Sigmoid colon (tissue), 7 donors: ENCODE measurements at regions of chr6 and their contacts with region 1.

Region 1: GRCh38 chr6:105077596-105078385 is 102.0 kb downstream of the POPDC3 start:
- DNase-seq: no peak
- H3K4me3 ChIP-seq: no peak overlapping the region
- H3K27ac ChIP-seq: no peak overlapping the region
- H3K4me1 ChIP-seq: peaks cover 0 to 28% (median 17%) of the 10 kb centered on the region in 4 donors
- H3K27me3 ChIP-seq: no peaks in the 10 kb centered on the region
- CTCF ChIP-seq: peak; percentile 15 to 59 (median 44)
- EP300 ChIP-seq: no peak
- POLR2A ChIP-seq: no peak

Region 2: DNA sequence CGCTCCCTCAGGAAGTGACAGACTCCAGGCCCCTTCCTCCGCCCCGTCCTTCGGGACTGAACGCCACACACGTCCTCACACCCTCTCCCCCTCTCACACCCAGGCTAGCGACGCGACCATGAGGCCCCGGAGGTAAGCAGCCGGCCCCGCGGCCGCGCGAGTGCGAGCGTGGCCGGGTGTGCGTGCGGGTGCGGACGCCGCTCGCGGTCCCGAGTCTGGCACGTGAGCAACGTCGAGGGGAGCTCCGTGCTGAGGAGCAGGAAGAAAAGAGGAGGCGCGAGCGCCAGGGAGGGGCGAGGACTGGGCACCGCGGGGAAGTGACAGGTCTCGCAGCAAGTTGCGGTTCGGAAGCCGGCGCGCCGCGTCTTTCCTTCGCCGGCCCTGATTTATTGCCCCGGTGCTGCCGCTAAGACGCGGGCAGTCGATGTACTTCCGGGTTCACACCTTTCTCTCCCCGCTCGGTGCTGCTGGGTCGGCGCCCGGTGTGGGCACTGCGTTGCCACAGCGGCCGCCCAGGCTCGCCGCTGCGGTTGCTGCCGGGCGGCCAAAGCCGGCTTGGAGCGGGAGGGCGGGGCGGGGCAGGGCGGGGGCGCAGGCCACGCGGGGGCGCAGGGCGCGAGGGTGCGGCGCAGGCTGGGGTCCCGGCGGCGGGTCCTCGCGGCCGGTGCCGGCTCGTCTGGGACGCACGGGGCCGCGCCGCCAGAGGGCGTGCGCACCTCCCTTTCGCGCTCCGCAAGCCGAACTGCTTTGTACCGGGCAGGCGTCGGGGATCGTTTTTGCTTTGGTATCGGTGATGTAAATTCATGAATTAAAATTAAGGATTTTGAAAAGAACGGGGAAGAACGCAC is 136.7 kb before region 1 on chr6:
- intact Hi-C with region 1: loop called (anchors 5 kb)
- DNase-seq: no peak
- H3K4me3 ChIP-seq: peak overlapping the region; percentile 5 to 46 (median 24)
- H3K27ac ChIP-seq: no peak overlapping the region
- H3K4me1 ChIP-seq: peaks cover 0 to 11% (median 10%) of the 10 kb centered on the region in 4 donors
- H3K27me3 ChIP-seq: peaks cover 23 to 94% (median 62%) of the 10 kb centered on the region in 3 donors
- CTCF ChIP-seq: peak in 1 of 4 experiments; percentile 31
- EP300 ChIP-seq: no peak
- POLR2A ChIP-seq: no peak

Region 3: DNA sequence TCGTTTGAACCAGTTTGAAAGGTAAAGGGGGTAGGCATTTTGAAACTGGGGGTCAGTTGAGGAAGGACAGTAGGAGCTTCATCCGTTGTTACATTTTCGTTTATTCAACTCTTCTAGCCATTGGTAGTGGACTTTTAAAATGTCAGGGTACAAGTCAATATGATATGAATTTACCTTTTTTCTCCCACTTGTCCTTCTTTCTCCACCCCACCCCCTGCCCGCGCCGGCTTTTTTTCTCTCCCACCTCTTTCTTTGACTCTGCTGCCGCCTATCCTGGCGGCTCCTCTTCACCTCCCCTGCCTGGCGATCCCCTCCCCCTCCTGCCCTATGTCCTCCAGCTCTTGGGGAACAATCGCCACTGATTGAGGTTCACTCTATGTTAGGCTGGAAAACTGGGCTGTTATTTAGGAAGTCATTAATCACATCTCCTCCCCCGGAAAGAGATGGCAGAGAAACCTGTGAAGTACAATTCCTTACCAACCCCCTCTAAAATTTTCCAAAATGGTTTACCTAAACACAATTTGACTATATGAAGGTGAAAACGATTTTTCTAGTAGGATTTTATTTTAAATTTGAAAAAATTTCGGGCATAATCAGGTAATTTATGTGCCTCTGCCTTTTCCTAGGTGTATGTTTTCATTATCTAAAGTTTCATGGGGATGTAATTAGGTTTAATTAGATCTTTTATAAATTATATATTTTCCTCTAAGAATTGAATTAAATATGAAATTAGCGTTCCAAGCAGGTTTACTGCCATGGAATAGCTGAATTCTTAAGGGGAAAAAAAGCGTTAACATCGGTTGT is 121.7 kb before region 1 on chr6:
- intact Hi-C with region 1: no loop called
- DNase-seq: no peak
- H3K4me3 ChIP-seq: no peak overlapping the region
- H3K27ac ChIP-seq: no peak overlapping the region
- H3K4me1 ChIP-seq: peaks cover 0 to 4% (median 0%) of the 10 kb centered on the region in 4 donors
- H3K27me3 ChIP-seq: peaks cover 38 to 93% (median 82%) of the 10 kb centered on the region in 3 donors
- CTCF ChIP-seq: no peak
- EP300 ChIP-seq: no peak
- POLR2A ChIP-seq: no peak

Region 4: DNA sequence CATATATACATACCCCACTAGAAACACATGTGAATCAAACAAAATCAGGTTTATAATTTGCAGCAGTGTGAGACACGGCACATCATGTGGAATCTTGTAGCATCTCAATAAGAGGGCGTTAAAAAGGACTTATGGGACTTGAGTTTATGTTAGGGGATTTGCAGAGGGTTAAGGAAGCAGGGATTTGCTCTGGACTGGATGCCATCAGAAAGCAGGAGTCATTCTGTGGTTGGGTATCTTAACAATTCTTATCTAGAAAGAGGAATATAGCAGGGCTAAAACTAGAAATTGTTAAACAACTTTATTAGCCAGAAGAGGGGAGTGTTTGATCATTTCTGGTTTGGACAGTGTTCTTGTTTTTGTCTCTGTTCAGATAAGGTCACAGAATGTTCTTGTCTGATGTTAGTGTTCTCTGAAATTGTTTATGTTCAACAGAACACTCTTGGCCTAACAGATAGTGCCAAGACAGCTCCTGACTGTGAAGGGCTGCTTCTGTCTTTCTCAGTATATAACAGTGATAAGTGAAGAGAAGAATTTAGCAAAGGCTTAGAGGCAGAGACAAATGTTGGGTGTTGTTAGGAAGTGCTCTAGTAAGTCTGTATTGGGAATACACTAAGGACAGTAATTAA is 81.7 kb before region 1 on chr6:
- intact Hi-C with region 1: loop called (anchors 1 kb)
- DNase-seq: peak; percentile 67
- H3K4me3 ChIP-seq: no peak overlapping the region
- H3K27ac ChIP-seq: peak overlapping the region; percentile 73 to 81 (median 75)
- H3K4me1 ChIP-seq: peaks cover 0 to 44% (median 9%) of the 10 kb centered on the region in 4 donors
- H3K27me3 ChIP-seq: no peaks in the 10 kb centered on the region
- CTCF ChIP-seq: peak; percentile 30 to 58 (median 40)
- EP300 ChIP-seq: peak in 2 of 4 donors; percentile 58 to 86
- POLR2A ChIP-seq: no peak